HepG2 (cell line): ENCODE measurements at regions of chr3 and their contacts with region 1.

Region 1: GRCh38 chr3:87109465-87109864 is 117.6 kb upstream of the CHMP2B start:
- DNase-seq: no peak
- ATAC-seq: no peak
- H3K4me3 ChIP-seq: no peak overlapping the region
- H3K27ac ChIP-seq: no peak overlapping the region
- H3K4me1 ChIP-seq: no peaks in the 10 kb centered on the region
- H3K27me3 ChIP-seq: no peaks in the 10 kb centered on the region
- CTCF ChIP-seq: no peak
- EP300 ChIP-seq: no peak
- POLR2A ChIP-seq: no peak
- RAD21 ChIP-seq: no peak

Region 2: GRCh38 chr3:86723433-86723832 is 386.0 kb before region 1 on chr3:
- CTCF ChIA-PET with region 1: no interaction called
- POLR2A ChIA-PET with region 1: no interaction called
- in situ Hi-C with region 1: no loop called
- intact Hi-C with region 1: no loop called
- DNase-seq: no peak
- ATAC-seq: no peak
- H3K4me3 ChIP-seq: no peak overlapping the region
- H3K27ac ChIP-seq: no peak overlapping the region
- H3K4me1 ChIP-seq: no peaks in the 10 kb centered on the region
- H3K27me3 ChIP-seq: no peaks in the 10 kb centered on the region
- CTCF ChIP-seq: no peak
- EP300 ChIP-seq: no peak
- POLR2A ChIP-seq: no peak
- RAD21 ChIP-seq: no peak

Region 3: DNA sequence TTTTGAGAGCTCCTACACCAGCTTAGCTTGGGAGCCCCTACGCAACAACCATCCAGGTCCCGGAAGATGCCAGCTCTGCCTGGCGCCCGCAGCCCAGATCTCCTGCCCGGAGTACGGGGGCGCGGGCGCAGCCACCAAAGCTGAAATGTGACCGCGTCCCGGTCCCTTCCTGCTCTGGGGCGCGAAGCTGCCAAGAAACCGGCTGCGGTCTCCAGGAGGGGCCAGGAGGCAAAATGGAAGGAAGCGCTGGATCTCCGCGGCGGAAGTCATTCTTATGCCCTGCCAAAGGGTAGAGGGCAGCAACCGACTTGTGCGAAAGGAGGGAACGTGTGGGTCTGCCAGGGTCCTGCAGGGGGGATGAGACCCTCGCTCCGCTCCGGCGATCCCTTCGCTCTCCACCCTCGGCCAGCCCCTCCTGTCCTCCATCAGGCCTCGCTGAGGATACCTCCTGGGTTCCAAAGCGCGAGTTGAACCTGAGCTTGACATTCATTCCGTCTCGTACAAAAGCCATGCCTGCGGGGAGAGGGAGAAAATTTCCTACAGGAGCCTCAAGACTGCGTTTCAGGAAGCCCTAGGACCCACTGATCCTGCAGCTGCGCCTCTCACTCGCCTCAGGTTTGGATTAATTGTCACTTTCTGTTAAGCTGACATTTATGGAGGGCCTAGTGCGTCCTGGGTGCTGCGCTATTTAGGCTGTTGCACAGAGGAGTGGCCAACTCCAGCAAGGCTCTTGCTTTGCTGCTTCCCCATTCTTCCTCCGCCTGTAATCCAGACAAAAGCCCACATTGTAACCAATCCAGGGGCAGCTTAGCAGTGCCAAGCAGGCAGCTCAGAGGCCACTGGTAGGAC is 20.2 kb before region 1 on chr3:
- CTCF ChIA-PET with region 1: no interaction called
- POLR2A ChIA-PET with region 1: no interaction called
- in situ Hi-C with region 1: no loop called
- intact Hi-C with region 1: loop called (anchors 2 kb)
- DNase-seq: no peak
- ATAC-seq: no peak
- H3K4me3 ChIP-seq: no peak overlapping the region
- H3K27ac ChIP-seq: no peak overlapping the region
- H3K4me1 ChIP-seq: no peaks in the 10 kb centered on the region
- H3K27me3 ChIP-seq: no peaks in the 10 kb centered on the region
- CTCF ChIP-seq: no peak
- EP300 ChIP-seq: no peak
- POLR2A ChIP-seq: no peak
- RAD21 ChIP-seq: no peak